ENCODE measurements at regions of chr7 and their contacts with region 1.

Region 1: DNA sequence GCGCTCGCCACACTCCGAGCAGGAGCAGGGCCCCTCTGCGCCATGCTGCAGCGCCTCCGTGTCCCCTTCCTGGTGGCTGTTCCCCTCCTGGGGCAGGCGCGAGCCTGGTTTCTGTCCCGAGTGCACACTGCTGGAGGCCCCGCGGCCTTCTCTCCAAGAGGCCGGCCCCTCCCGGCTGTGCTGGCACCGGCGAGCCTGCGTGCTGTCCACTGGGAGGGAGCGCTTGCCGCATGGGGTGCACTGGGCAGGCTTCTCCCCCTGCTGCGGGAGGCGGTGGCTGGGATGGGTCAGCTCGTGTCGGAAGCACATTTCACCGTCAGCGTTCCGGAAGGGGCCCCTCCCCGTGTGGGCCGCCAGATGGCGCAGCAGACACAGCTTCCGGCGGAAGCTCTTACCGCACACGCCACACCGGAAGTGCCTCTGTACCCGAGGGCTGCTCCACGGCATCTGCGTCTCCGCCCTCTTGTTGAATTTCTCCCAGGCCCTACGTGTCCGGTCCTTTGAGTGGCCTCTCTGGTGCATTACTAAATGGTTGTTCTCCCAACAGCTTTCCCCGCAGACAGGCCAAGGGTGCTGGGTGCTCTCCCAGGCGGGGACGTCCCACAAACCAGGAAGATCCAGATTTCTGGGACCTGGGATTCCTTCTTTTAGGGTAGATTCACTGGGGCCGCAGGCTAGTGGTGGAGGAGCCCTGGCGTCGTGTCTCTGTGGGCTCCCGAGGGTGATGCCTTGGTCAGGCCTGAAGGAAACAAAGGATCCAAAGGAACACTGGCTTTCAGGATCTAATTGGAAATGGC is 18.7 kb downstream of the ZNF786 start:
- DNase-seq: peak; percentile 33
- H3K4me3 Mint-ChIP-seq: peak overlapping the region; percentile 26
- H3K27ac Mint-ChIP-seq: no peak overlapping the region
- H3K4me1 Mint-ChIP-seq: peaks cover 8% of the 10 kb centered on the region
- H3K27me3 Mint-ChIP-seq: no peaks in the 10 kb centered on the region

Region 2: DNA sequence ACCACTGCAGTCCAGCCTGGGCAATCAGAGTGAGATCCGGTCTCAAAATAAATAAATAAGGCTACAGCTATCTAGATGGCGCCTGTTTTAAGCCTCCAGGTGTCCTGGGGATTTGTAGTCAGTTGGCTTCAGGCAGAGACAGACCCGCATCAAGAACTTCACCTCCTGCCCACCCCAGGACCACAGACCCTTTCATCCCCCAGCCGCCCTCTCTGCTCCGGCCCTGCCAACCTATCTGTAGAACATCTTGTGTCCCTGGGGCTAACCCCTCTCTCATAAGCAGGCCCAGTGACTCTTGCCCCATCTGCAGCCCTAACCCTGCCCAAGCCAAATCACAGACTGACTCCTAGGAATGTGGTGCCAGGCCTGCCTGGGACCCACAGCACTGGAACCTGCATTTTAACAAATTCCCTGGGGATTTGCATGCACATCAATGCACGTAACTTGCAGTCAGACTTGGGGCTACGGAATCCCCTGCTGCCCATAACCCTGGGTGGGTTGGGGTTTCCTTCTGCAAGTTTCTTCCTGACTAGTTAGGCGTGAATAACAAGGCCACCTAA is 61.3 kb before region 1 on chr7:
- CTCF ChIA-PET with region 1: interaction called, 21 read pairs
- intact Hi-C with region 1: no loop called
- DNase-seq: no peak
- H3K4me3 Mint-ChIP-seq: no peak overlapping the region
- H3K27ac Mint-ChIP-seq: no peak overlapping the region
- H3K4me1 Mint-ChIP-seq: peaks cover 3% of the 10 kb centered on the region
- H3K27me3 Mint-ChIP-seq: no peaks in the 10 kb centered on the region

Measured in activated naive CD4-positive, alpha-beta T cell treated with anti-CD3 and anti-CD28 coated beads for 36 hours (primary cell).